ENCODE measurements at regions of chrX and their contacts with region 1.

Region 1: GRCh38 chrX:97685753-97686152 is 802.0 kb downstream of the RPA4 start:
- DNase-seq: peak; percentile 12
- H3K4me3 Mint-ChIP-seq: no peak overlapping the region
- H3K27ac Mint-ChIP-seq: no peak overlapping the region
- H3K4me1 Mint-ChIP-seq: no peaks in the 10 kb centered on the region
- H3K27me3 Mint-ChIP-seq: peaks cover 3% of the 10 kb centered on the region

Region 2: GRCh38 chrX:96770315-96770714 is 915.4 kb before region 1 on chrX:
- CTCF ChIA-PET with region 1: interaction called, 3 read pairs
- intact Hi-C with region 1: loop called (anchors 1 kb)
- DNase-seq: no peak
- H3K4me3 Mint-ChIP-seq: no peak overlapping the region
- H3K27ac Mint-ChIP-seq: no peak overlapping the region
- H3K4me1 Mint-ChIP-seq: no peaks in the 10 kb centered on the region
- H3K27me3 Mint-ChIP-seq: no peaks in the 10 kb centered on the region

Measured in activated naive CD4-positive, alpha-beta T cell treated with anti-CD3 and anti-CD28 coated beads for 36 hours (primary cell).